IMR-90 (cell line): ENCODE measurements at regions of chr17 and their contacts with region 1.

Region 1: DNA sequence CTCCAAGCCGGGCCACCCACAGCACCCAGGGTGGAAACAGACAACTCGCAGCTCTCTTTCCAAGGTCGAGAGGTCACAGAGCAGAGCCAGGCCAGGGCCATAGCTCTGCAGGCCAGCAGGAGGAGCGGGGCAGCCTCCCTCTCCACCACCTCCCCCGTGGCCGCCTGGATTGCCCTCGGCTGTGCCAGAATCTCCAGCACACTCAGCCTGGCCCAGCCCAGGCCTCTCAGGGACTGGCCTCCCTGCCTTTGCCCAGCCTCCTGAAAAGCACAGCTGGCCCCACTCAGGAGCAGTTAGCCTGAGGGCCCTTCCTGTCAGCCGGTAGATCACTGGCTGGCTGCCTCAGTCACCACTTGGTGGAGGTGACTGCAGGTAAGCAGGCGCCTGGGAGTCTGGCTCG is 85.8 kb upstream of the SEC14L1 start:
- DNase-seq: no peak
- ATAC-seq: peak; percentile 21; the same call in 1 of the 2 replicates
- H3K4me3 ChIP-seq: no peak overlapping the region
- H3K27ac ChIP-seq: no peak overlapping the region
- H3K4me1 ChIP-seq: no peaks in the 10 kb centered on the region
- H3K27me3 ChIP-seq: peaks cover 54% of the 10 kb centered on the region
- CTCF ChIP-seq: no peak
- POLR2A ChIP-seq: no peak
- RAD21 ChIP-seq: no peak

Region 2: DNA sequence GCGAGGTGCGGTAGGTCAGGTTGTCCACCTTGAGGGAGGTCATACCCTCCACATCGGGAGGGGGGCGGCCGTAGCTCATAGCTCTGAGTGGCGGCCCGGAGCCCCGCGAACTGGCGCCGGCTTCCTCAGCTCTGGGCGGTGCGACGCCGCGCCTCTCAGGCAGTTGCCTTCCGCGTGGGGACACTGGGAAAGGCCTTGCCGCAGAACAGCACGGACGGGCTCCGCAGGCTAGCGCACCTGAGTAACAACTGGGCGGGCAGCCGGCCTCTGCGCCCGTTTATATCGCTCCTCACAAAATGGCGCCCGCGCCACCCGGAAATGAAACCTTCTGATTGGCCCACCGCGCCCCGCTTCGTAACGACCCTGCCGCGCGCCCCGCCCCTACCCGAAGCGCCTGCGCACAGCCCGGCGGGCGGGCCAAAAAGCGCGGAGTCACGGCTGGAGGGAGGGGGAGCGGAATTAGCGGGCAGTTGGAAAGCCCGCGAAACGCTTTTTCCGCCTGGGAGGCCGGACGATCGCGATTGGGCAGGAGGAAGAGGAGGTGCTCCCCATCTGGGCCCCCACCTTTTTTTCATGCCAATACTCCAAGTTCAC is 317.8 kb before region 1 on chr17 and contains the start of gene SRSF2:
- CTCF ChIA-PET with region 1: no interaction called
- POLR2A ChIA-PET with region 1: no interaction called
- dilution Hi-C with region 1: no loop called
- in situ Hi-C with region 1: no loop called
- intact Hi-C with region 1: loop called (anchors 5 kb)
- DNase-seq: peak; percentile 97
- ATAC-seq: peak; percentile 81
- H3K4me3 ChIP-seq: peak within 1 kb of the TSS; percentile 89
- H3K27ac ChIP-seq: peak within 1 kb of the TSS; percentile 95
- H3K4me1 ChIP-seq: peaks cover 2% of the 10 kb centered on the region; the same call in 1 of the 2 replicates
- H3K27me3 ChIP-seq: no peaks in the 10 kb centered on the region
- CTCF ChIP-seq: no peak
- POLR2A ChIP-seq: peak; percentile 100
- RAD21 ChIP-seq: 0 out of 2 replicates have a peak, but pooled peaks have one; percentile 18
- total RNA-seq, gene SRSF2: 71.7 and 98.0 TPM in 2 replicates

Region 3: GRCh38 chr17:77011173-77012011 is 43.5 kb before region 1 on chr17:
- CTCF ChIA-PET with region 1: interaction called, 5 read pairs
- POLR2A ChIA-PET with region 1: no interaction called
- dilution Hi-C with region 1: no loop called
- in situ Hi-C with region 1: no loop called
- intact Hi-C with region 1: loop called (anchors 5 kb)
- DNase-seq: peak; percentile 31
- ATAC-seq: no peak
- H3K4me3 ChIP-seq: no peak overlapping the region
- H3K27ac ChIP-seq: no peak overlapping the region
- H3K4me1 ChIP-seq: no peaks in the 10 kb centered on the region
- H3K27me3 ChIP-seq: peaks cover 9% of the 10 kb centered on the region
- CTCF ChIP-seq: peak; percentile 59
- POLR2A ChIP-seq: no peak
- RAD21 ChIP-seq: peak; percentile 63